GM12878 (cell line): ENCODE measurements at regions of chr9 and their contacts with region 1.

Region 1: DNA sequence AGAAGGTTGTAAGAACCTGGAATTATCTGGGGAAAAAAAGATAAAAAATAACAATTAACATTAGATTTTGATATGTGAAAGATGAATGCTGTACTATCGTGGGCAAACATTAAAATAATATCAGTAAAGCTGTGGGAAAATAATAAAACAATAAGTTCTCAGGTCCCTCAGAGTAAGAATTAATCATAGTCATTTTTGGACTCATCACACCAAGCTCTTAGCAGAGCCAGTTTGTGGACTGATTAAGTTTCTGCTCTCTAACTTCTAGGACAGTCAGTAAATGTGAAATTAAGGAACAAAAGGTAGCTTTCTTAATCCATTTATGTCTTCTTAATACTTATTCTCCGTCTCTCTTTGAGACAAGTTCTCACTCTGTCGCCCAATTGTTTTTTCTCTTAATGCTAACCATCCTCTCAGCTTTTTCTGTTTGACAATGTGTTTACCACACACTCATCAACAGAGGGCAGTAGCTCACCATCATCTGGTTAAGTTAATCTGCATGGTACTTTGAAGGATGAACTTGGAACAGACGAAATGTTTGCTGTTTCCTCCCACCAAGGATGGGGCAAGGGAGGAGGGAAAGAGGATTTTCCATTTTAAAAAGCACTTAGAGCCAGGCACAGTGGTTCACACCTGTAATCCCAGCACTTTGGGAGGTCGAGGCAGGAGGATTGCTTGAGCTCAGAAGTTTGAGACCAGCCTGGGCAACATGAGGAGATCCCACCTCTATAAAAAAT is 5.3 kb upstream of the ACO1 start:
- DNase-seq: peak; percentile 44
- ATAC-seq: peak; percentile 92
- H3K4me3 ChIP-seq: no peak overlapping the region
- H3K27ac ChIP-seq: no peak overlapping the region
- H3K4me1 ChIP-seq: no peaks in the 10 kb centered on the region
- H3K27me3 ChIP-seq: no peaks in the 10 kb centered on the region; a peak in 2 of 4 replicates
- CTCF ChIP-seq: peak; percentile 76 to 91 (median 85)
- EP300 ChIP-seq: no peak
- POLR2A ChIP-seq: no peak
- RAD21 ChIP-seq: peak; percentile 99

Region 2: GRCh38 chr9:32326146-32326545 is 53.0 kb before region 1 on chr9:
- CTCF ChIA-PET with region 1: no interaction called
- POLR2A ChIA-PET with region 1: no interaction called
- RAD21 ChIA-PET with region 1: no interaction called
- SMC1A ChIA-PET with region 1: no interaction called
- in situ Hi-C with region 1: no loop called
- intact Hi-C with region 1: no loop called
- DNase-seq: no peak
- ATAC-seq: no peak
- H3K4me3 ChIP-seq: no peak overlapping the region
- H3K27ac ChIP-seq: no peak overlapping the region
- H3K4me1 ChIP-seq: no peaks in the 10 kb centered on the region
- H3K27me3 ChIP-seq: no peaks in the 10 kb centered on the region
- CTCF ChIP-seq: no peak
- EP300 ChIP-seq: no peak
- POLR2A ChIP-seq: no peak
- RAD21 ChIP-seq: no peak

Region 3: DNA sequence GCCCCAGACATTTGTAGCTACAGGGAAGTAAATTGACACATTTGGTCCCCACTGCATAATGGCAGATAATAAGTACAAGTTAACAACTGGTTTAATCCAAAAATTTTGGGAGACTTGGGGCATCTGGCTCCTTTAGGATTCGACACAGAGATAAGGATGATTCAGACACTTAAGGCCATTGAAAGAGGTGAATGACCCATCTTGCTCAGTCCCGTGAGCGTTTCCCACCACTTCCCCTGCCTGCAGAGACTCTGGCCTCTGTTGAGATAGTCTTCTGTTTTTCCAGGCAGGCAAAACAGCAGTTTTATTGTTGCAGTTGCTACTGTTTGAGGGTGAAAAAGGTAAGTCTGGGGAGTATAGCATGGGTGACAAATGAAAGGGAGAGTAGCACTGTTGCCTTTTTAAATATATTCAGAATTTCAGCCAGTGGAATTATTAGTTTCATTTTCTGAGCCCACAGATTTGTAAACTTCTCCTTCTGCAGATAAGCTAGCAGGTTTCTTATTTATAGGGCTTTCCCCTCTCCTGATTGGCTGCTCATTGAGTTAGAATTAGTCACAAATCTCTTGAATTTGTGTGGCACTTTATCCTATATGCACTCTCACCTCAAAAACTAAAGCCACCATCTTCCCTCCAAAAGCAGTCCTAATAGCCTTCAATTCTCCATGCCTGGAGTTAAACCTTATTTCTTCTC is 24.6 kb after region 1 on chr9:
- CTCF ChIA-PET with region 1: interaction called, 10 read pairs
- POLR2A ChIA-PET with region 1: no interaction called
- RAD21 ChIA-PET with region 1: interaction called, 5 read pairs
- SMC1A ChIA-PET with region 1: interaction called, 13 read pairs
- in situ Hi-C with region 1: no loop called
- intact Hi-C with region 1: no loop called
- DNase-seq: no peak
- ATAC-seq: no peak
- H3K4me3 ChIP-seq: no peak overlapping the region
- H3K27ac ChIP-seq: no peak overlapping the region
- H3K4me1 ChIP-seq: peaks cover 3% of the 10 kb centered on the region; the same call in 1 of the 2 replicates
- H3K27me3 ChIP-seq: no peaks in the 10 kb centered on the region
- CTCF ChIP-seq: no peak
- EP300 ChIP-seq: no peak
- POLR2A ChIP-seq: no peak
- RAD21 ChIP-seq: no peak

Region 4: DNA sequence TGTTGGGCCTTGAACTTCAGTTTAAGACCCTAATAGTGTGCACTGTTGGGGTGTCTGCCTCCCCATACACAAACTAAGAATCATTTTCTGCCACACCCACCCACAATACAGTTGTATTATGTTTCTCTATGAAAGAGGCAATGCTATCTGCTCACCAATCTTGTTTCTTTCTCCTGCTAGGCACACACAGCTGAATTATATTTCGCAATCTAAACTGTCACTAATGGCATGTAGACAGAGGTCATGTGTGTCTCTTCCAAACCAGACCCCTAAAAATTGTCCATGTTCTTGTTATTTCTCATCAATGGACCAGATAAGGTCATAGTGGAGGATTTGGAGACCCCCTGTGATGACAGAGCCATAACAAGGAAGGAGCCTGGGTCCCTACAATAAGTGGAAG is 89.6 kb after region 1 on chr9:
- CTCF ChIA-PET with region 1: interaction called, 11 read pairs
- POLR2A ChIA-PET with region 1: no interaction called
- RAD21 ChIA-PET with region 1: interaction called, 3 read pairs
- SMC1A ChIA-PET with region 1: no interaction called
- in situ Hi-C with region 1: no loop called
- intact Hi-C with region 1: no loop called
- DNase-seq: no peak
- ATAC-seq: no peak
- H3K4me3 ChIP-seq: no peak overlapping the region
- H3K27ac ChIP-seq: no peak overlapping the region
- H3K4me1 ChIP-seq: no peaks in the 10 kb centered on the region
- H3K27me3 ChIP-seq: no peaks in the 10 kb centered on the region
- CTCF ChIP-seq: no peak
- EP300 ChIP-seq: no peak
- POLR2A ChIP-seq: no peak
- RAD21 ChIP-seq: no peak

Region 5: DNA sequence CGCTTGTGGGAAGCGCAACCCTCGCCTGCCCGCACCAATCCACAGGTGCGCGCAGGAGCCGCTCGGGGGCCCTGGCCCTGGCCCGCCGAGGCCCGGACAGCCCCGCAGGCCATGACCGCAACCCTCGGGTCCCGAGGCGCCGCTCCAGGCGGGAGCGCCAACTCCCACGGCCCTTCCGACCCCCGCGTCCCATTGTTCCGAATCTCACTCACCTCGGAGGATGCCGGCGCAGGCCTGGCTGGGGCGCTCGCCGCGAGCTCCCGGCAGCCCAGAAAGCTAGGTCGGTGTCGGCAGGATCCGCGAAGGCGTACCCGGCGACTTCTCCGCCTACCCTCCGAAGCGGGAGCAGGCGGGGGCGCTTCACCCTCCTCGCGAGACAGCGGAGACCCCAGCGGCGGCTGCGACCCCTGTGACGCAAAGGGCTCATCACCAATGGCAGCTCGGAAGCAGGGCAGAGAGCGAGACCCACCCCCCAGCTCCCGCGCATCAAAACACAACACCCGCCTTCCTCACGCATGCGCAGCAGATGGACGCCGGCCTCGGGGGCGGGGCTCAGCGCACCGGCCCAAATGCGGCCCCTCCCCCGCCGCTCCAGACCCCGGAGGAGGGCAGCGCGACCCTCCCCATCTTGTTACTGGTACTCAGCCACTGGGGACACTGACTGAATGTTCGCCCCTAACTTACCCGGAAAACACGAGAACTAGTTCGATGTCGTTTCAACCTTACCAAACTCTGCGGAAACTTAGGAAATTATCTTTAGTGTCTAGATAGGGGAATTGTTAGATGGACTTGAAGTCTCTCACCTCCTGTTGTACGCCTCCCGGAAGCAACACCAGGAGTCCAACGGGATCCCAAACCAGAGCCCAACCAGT is 171.6 kb after region 1 on chr9:
- CTCF ChIA-PET with region 1: interaction called, 38 read pairs
- POLR2A ChIA-PET with region 1: interaction called, 9 read pairs
- RAD21 ChIA-PET with region 1: interaction called, 18 read pairs
- SMC1A ChIA-PET with region 1: interaction called, 9 read pairs
- in situ Hi-C with region 1: no loop called
- intact Hi-C with region 1: no loop called
- DNase-seq: peak; percentile 64
- ATAC-seq: peak; percentile 79
- H3K4me3 ChIP-seq: peak overlapping the region; percentile 83
- H3K27ac ChIP-seq: peak overlapping the region; percentile 96
- H3K4me1 ChIP-seq: peaks cover 8% of the 10 kb centered on the region
- H3K27me3 ChIP-seq: no peaks in the 10 kb centered on the region
- CTCF ChIP-seq: 0 out of 6 replicates have a peak, but pooled peaks of 2 of the 3 experiments have one; percentile 16
- EP300 ChIP-seq: no peak
- POLR2A ChIP-seq: peak; percentile 75
- RAD21 ChIP-seq: no peak

Region 6: DNA sequence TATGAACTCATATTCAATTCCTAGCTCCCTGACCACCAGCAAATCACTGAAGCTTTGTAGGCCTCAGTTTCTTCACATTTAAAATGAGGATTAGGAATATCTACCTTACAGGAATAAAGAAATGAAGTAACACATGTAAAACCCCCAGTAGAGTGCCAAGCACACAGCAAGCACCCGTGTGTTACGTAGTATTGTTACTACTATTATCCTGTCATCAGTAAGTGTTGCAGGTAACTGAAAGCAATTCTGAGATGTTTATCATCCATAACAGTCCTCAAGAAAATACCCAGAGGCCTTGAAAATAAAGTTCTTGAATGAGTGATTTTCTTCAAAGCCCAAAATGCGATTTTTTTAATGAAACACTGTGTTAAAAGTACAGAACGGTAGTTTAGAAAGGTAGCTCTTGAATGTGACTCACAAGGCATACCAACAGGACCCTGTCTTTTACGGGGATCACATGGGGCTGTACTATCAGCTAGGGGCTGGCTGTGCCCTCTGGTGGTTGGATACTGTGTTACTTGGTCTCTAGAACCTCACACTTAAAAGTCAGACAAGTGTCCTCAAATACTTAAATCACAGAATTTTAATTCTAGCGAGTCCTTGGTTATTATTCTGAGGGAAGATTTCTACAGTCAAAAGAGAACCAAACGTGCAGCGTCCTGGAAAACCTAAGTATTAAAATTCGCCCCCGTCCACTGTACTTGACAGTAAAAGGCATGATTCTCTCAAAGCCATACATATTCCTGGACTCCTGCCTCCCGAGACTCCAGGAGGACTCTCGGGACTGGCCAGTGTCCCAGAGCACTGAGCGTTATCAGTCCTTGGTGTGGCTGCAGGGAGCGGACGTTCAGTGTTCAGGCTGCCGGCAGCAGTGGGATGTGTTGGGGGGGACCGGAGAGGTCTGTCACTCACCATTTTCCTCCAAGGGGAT is 193.1 kb after region 1 on chr9:
- CTCF ChIA-PET with region 1: interaction called, 597 read pairs
- POLR2A ChIA-PET with region 1: interaction called, 12 read pairs
- RAD21 ChIA-PET with region 1: interaction called, 368 read pairs
- SMC1A ChIA-PET with region 1: interaction called, 285 read pairs
- in situ Hi-C with region 1: loop called (anchors 5 kb)
- intact Hi-C with region 1: loop called (anchors 1 kb)
- DNase-seq: peak; percentile 59
- ATAC-seq: peak; percentile 96
- H3K4me3 ChIP-seq: peak overlapping the region; percentile 85
- H3K27ac ChIP-seq: peak overlapping the region; percentile 78
- H3K4me1 ChIP-seq: no peaks in the 10 kb centered on the region; the same call in 1 of the 2 replicates
- H3K27me3 ChIP-seq: no peaks in the 10 kb centered on the region
- CTCF ChIP-seq: peak; percentile 78 to 85 (median 80)
- EP300 ChIP-seq: no peak
- POLR2A ChIP-seq: no peak
- RAD21 ChIP-seq: peak; percentile 74

Region 7: DNA sequence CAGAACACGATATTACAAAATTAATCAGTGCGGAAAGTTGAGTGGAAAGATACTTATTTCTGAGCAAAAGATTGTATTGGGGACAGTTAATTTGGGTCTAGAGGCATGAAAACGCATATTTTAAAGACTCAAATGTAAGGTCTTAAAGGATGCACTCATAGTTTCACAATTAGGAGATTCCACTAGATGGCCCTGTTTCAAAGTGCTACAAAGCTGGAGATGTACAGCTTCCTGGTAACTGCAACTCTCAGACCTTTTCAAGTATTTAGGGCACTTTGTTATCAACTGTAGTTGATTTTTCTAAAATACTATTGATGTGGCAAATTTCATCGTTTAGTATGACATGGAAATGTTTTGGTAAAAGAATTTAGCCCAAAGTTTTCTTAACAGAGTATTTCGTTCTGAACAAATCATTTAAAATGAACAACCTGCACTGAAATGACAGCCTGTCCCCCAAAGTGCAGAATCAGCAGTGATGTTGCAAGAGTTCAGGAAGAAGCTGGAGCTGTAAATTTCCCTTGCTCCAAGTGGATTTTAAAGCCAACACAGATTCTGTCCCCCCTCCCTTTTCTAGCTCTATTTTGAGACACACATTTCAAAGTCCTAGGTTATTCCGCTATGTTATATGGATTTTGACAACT is 210.0 kb after region 1 on chr9:
- CTCF ChIA-PET with region 1: interaction called, 597 read pairs
- POLR2A ChIA-PET with region 1: no interaction called
- RAD21 ChIA-PET with region 1: interaction called, 5 read pairs
- SMC1A ChIA-PET with region 1: interaction called, 25 read pairs
- in situ Hi-C with region 1: no loop called
- intact Hi-C with region 1: no loop called
- DNase-seq: no peak
- ATAC-seq: peak; percentile 88
- H3K4me3 ChIP-seq: no peak overlapping the region
- H3K27ac ChIP-seq: no peak overlapping the region
- H3K4me1 ChIP-seq: no peaks in the 10 kb centered on the region
- H3K27me3 ChIP-seq: no peaks in the 10 kb centered on the region
- CTCF ChIP-seq: peak; percentile 39 to 56 (median 56); a peak in 5 of 6 replicates
- EP300 ChIP-seq: no peak
- POLR2A ChIP-seq: no peak
- RAD21 ChIP-seq: peak; percentile 65